ENCODE measurements at regions of chr4 and their contacts with region 1.

Region 1: DNA sequence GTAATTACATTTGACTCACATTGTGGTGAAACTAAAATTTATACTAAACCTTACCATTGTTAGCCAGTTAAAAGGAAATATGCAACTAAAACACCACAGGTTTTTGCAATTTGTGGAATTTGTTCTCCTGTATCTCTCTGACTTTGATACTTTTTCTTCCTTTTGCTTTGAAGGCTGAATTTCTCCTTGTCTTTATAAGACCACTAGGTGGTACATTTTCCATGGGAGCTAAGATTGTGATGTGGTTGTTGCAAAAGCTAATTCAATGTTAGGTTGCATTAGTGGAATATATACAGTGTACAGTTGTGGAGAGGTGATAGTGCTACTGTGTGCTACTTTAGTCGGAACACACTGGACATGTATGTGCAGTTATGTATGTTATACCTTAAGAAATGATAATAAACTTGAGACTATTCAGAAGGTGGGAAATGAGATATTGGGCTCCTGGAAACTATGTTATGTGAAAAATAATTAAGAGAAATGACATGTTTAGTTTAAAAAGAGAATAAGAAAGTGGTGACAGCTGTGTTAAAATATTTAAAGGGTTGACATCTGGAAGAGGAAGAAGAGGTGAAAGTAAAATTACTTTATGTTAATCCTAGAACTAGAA is 70.3 kb downstream of the ARL9 start:
- DNase-seq: peak; percentile 42
- H3K4me3 ChIP-seq: no peak overlapping the region
- H3K27ac ChIP-seq: no peak overlapping the region
- H3K4me1 ChIP-seq: no peaks in the 10 kb centered on the region
- H3K27me3 ChIP-seq: no peaks in the 10 kb centered on the region
- CTCF ChIP-seq: peak; percentile 17 to 29
- POLR2A ChIP-seq: no peak

Region 2: DNA sequence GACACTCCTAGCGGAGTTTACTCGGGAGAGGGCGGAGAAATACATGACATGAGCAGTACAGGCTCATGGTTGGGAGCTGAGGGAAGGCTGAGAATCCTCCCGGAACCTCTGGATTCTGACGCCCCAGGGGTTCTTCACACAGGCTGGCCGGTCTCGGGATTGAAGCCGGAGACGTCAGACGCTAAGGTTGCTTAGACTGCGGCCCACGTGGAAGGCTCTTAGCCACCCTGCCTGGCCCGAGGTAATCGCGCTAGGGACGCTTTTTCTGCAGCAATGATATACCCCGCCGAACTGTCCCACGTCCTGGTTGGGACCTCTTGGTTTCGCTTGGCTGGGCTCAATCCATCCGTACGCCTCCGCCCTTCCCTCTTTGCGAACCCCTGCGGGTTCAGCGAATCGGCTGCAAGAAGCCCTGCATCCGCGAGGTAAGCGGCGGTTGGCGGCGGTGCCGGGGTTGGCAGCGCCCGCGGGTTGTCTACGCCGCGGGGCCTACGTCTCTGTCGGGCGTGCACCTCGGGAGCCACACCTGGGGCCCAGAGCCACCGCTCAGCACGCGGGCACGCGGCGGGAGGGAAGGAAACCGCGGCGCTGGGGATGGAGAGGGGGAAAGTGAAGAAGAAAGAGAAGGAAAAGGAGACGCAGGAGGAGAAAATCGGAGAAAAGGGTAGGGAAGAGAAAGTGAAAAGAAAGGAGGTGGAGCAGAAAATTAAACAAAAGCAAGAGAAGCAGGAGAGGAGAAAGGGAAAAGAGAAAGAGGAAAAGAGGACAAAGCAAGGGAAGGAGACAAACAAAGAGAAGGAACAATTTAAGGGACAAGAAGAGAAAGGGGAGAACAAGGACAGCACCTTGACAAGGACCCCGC is 70.4 kb before region 1 on chr4 and contains the start of gene ARL9:
- CTCF ChIA-PET with region 1: no interaction called
- POLR2A ChIA-PET with region 1: no interaction called
- dilution Hi-C with region 1: no loop called
- intact Hi-C with region 1: loop called (anchors 2 kb)
- DNase-seq: peak; percentile 61
- H3K4me3 ChIP-seq: peak within 1 kb of the TSS; percentile 48 to 69 (median 67)
- H3K27ac ChIP-seq: no peak within 1 kb of the TSS
- H3K4me1 ChIP-seq: peaks cover 13% of the 10 kb centered on the region
- H3K27me3 ChIP-seq: no peaks in the 10 kb centered on the region
- CTCF ChIP-seq: no peak
- POLR2A ChIP-seq: no peak
- total RNA-seq, gene ARL9: 0.51 and 1.1 TPM in 2 replicates

Region 3: GRCh38 chr4:56587091-56587490 is 11.2 kb after region 1 on chr4:
- CTCF ChIA-PET with region 1: interaction called, 12 read pairs
- POLR2A ChIA-PET with region 1: no interaction called
- dilution Hi-C with region 1: no loop called
- intact Hi-C with region 1: no loop called
- DNase-seq: no peak
- H3K4me3 ChIP-seq: no peak overlapping the region
- H3K27ac ChIP-seq: no peak overlapping the region
- H3K4me1 ChIP-seq: no peaks in the 10 kb centered on the region
- H3K27me3 ChIP-seq: peaks cover 5 to 14% of the 10 kb centered on the region in 2 experiments
- CTCF ChIP-seq: no peak
- POLR2A ChIP-seq: no peak

Region 4: GRCh38 chr4:56641494-56642051 is 65.6 kb after region 1 on chr4:
- CTCF ChIA-PET with region 1: interaction called, 14 read pairs
- POLR2A ChIA-PET with region 1: no interaction called
- dilution Hi-C with region 1: no loop called
- intact Hi-C with region 1: no loop called
- DNase-seq: peak; percentile 87
- H3K4me3 ChIP-seq: no peak overlapping the region
- H3K27ac ChIP-seq: peak overlapping the region; percentile 74
- H3K4me1 ChIP-seq: peaks cover 19% of the 10 kb centered on the region
- H3K27me3 ChIP-seq: no peaks in the 10 kb centered on the region
- CTCF ChIP-seq: no peak
- POLR2A ChIP-seq: no peak

Region 5: DNA sequence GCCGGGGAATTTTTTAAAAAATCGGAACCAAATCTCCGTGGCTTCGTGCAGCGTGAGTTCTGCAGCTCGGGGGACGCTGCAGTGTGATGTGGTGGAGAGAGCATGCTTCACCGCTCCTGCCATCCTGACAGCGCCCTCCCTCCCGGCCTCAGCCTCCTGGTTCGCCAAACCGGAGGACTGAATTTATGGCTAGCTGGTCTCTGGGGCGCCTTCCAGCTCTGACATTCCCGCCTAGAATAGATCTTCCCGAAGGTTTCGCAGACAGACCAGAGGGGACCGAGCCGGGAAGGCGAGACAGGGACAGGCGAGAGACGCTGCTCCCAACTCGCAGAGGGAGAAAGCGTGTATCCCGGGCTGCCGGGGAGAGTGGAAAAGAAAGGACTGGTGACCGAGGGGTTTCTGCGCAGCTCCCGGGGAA is 79.3 kb after region 1 on chr4:
- CTCF ChIA-PET with region 1: interaction called, 16 read pairs
- POLR2A ChIA-PET with region 1: no interaction called
- dilution Hi-C with region 1: no loop called
- intact Hi-C with region 1: no loop called
- DNase-seq: no peak
- H3K4me3 ChIP-seq: peak overlapping the region; percentile 54 to 71 (median 54)
- H3K27ac ChIP-seq: no peak overlapping the region
- H3K4me1 ChIP-seq: peaks cover 22% of the 10 kb centered on the region
- H3K27me3 ChIP-seq: peaks cover 0 to 9% of the 10 kb centered on the region in 2 experiments
- CTCF ChIP-seq: no peak
- POLR2A ChIP-seq: no peak

Region 6: DNA sequence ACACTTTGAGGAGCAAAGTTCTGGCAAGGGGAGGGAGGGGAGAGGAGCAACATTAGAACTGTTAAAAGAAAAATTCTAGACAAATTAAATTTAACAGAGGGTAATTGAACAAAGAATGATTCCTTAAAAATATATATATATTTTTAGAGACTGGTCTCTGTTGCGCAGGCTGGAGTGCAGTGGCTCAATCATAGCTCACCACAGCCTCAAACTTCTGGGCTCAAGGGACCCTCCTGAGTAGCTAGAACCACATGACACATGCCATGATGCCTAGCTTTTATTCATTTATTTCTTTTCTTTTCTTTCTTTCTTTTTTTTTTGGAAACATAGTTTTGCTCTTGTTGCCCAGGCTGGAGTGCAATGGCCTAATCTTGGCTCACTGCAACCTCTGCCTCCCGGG is 264.6 kb after region 1 on chr4:
- CTCF ChIA-PET with region 1: interaction called, 36 read pairs
- POLR2A ChIA-PET with region 1: no interaction called
- dilution Hi-C with region 1: no loop called
- intact Hi-C with region 1: no loop called
- DNase-seq: no peak
- H3K4me3 ChIP-seq: no peak overlapping the region
- H3K27ac ChIP-seq: no peak overlapping the region
- H3K4me1 ChIP-seq: no peaks in the 10 kb centered on the region
- H3K27me3 ChIP-seq: no peaks in the 10 kb centered on the region
- CTCF ChIP-seq: no peak
- POLR2A ChIP-seq: no peak

Region 7: DNA sequence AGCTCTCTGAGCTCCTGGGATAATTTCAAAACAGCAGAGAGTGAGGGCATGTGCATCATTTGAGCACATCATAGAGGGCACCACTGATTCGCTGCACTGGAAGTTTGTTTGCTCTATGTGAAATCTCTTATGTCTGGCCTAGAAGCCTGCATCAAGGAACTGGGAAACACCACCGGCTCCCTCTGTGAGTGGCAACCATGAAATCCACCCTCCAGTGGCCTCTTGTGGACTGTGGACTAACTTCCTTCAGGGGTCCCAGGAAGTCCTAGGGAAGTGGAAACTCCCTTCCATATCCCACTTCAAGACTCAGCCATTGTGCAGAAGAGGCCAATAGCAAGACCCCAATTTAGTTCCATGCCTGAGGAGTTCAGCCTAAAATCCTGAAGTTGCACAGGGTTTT is 582.3 kb after region 1 on chr4:
- CTCF ChIA-PET with region 1: no interaction called
- POLR2A ChIA-PET with region 1: no interaction called
- dilution Hi-C with region 1: no loop called
- intact Hi-C with region 1: no loop called
- DNase-seq: no peak
- H3K4me3 ChIP-seq: no peak overlapping the region
- H3K27ac ChIP-seq: no peak overlapping the region
- H3K4me1 ChIP-seq: peaks cover 9% of the 10 kb centered on the region
- H3K27me3 ChIP-seq: no peaks in the 10 kb centered on the region
- CTCF ChIP-seq: no peak
- POLR2A ChIP-seq: no peak

Measured in endothelial cell of umbilical vein (primary cell).